Gastrocnemius medialis (tissue), 4 donors: ENCODE measurements at regions of chr5 and their contacts with region 1.

Region 1: DNA sequence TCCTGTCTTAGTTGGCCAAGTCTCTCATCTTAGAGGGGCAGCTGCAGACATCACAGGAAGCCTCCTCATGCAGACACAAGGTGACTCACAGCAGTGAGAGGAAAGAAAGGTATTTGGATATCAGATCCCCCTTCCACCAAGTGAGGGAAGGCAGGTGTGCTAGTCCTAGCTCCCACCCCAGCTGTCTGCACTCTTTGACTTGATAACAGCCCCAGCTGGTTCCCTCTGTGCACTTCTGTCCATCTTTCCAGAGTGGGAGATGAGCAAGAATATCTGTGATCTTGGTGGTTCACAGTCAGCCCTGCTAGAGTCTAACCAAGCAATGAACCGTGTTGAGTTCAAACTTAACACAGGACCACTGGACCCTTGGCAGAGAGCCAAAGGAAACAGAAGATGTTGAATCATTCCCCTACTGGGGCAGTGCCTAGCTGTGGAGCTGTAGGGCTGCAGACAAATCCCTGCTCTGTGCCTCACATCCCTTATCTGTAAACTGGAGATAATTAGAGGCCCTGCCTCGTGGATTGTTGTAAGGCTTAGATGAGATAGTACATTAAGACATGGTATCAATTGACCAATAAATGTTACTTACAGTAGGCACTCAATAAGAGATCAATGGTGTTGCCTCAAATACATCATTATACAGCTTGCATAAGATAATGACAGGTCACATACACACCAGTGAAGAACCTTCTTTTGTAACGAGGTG is 39.1 kb downstream of the SH3RF2 start:
- DNase-seq: peak; percentile 43 to 72
- ATAC-seq: peak; percentile 24 to 85
- H3K4me3 ChIP-seq: no peak overlapping the region
- H3K27ac ChIP-seq: peak overlapping the region; percentile 77 to 88 (median 78)
- H3K4me1 ChIP-seq: peaks cover 39 to 50% of the 10 kb centered on the region in 2 donors
- H3K27me3 ChIP-seq: no peaks in the 10 kb centered on the region
- CTCF ChIP-seq: no peak
- POLR2A ChIP-seq: no peak

Region 2: GRCh38 chr5:145834917-145835847 is 140.3 kb before region 1 on chr5 and contains the start of gene PRELID2:
- in situ Hi-C with region 1: no loop called
- intact Hi-C with region 1: loop called (anchors 10 kb)
- DNase-seq: peak; percentile 64 to 77
- ATAC-seq: peak; percentile 92 to 93
- H3K4me3 ChIP-seq: peak within 1 kb of the TSS; percentile 63 to 75 (median 67)
- H3K27ac ChIP-seq: peak within 1 kb of the TSS; percentile 56 to 77 (median 65)
- H3K4me1 ChIP-seq: peaks cover 7 to 8% of the 10 kb centered on the region in 2 donors
- H3K27me3 ChIP-seq: no peaks in the 10 kb centered on the region
- CTCF ChIP-seq: no peak
- POLR2A ChIP-seq: peak; percentile 35 to 48
- total RNA-seq, gene PRELID2: 1.1 to 6.7 (median 1.2) TPM in 3 of 4 donors, not detected in the other

Region 3: GRCh38 chr5:145936401-145937131 is 38.9 kb before region 1 on chr5 and contains the start of gene SH3RF2:
- in situ Hi-C with region 1: no loop called
- intact Hi-C with region 1: loop called (anchors 5 kb)
- DNase-seq: peak; percentile 41 to 68
- ATAC-seq: peak; percentile 68 to 69
- H3K4me3 ChIP-seq: peak within 1 kb of the TSS; percentile 57 to 60 (median 59)
- H3K27ac ChIP-seq: peak within 1 kb of the TSS; percentile 80 to 90 (median 84)
- H3K4me1 ChIP-seq: peaks cover 3 to 12% of the 10 kb centered on the region in 2 donors
- H3K27me3 ChIP-seq: no peaks in the 10 kb centered on the region
- CTCF ChIP-seq: no peak
- POLR2A ChIP-seq: peak; percentile 59 to 78
- total RNA-seq, gene SH3RF2: 19.2 to 97.1 (median 39.1) TPM

Region 4: GRCh38 chr5:145946112-145946861 is 29.2 kb before region 1 on chr5:
- in situ Hi-C with region 1: no loop called
- intact Hi-C with region 1: loop called (anchors 2 kb)
- DNase-seq: peak in 1 of 2 donors; percentile 81
- ATAC-seq: peak; percentile 69 to 90
- H3K4me3 ChIP-seq: no peak overlapping the region
- H3K27ac ChIP-seq: peak overlapping the region; percentile 82 to 90 (median 84)
- H3K4me1 ChIP-seq: peaks cover 19 to 58% of the 10 kb centered on the region in 2 donors
- H3K27me3 ChIP-seq: no peaks in the 10 kb centered on the region
- CTCF ChIP-seq: no peak
- POLR2A ChIP-seq: peak in 1 of 2 donors; percentile 30